ENCODE measurements at regions of chr1 and their contacts with region 1.

Region 1: GRCh38 chr1:199313434-199313833 is 674.6 kb downstream of the PTPRC start:
- DNase-seq: peak; percentile 95
- H3K4me3 ChIP-seq: no peak overlapping the region
- H3K27ac ChIP-seq: peak overlapping the region; percentile 95
- H3K4me1 ChIP-seq: peaks cover 47% of the 10 kb centered on the region
- H3K27me3 ChIP-seq: no peaks in the 10 kb centered on the region
- CTCF ChIP-seq: peak; percentile 62

Region 2: GRCh38 chr1:198771563-198772153 is 541.8 kb before region 1 on chr1:
- CTCF ChIA-PET with region 1: no interaction called
- POLR2A ChIA-PET with region 1: no interaction called
- intact Hi-C with region 1: loop called (anchors 1 kb)
- DNase-seq: peak; percentile 91
- H3K4me3 ChIP-seq: no peak overlapping the region
- H3K27ac ChIP-seq: peak overlapping the region; percentile 78
- H3K4me1 ChIP-seq: peaks cover 39% of the 10 kb centered on the region
- H3K27me3 ChIP-seq: no peaks in the 10 kb centered on the region
- CTCF ChIP-seq: peak; percentile 78

Region 3: DNA sequence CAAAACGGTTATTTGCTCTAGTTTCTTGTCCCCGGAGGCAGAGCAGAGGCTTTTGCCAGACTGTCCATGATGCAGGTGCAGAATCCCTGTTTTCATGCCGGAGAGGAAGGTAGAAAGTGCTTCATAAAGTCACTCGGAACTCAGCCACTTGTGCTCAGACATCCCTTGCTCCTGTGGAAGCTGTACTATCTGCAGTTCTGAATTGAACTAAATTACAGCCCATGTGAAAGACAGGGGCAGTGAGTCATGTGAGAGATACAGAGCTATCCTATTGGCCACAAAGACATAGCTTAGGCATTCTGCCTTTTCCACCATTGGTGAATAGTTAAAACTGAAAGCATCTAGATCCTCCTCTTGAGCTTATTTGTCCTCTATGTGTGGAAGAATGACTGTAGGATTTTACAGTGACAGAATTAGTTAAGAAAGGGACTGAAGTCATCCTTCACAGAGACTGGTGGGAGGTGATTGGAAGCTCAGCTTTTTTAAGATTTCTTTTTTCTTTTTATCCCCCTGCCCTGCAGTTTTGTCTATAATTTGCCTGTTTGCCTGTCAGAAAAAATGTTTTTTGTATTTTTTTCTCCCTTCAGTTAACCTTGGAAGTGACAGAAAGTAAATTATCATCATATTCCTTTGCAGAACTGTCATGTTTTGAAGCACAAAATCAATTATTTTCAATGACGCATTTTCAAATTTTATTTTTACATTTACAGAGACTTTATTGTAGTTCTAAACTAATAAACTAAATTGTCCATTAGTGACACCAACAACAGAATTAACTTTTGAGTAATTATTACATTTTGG is 376.0 kb before region 1 on chr1:
- CTCF ChIA-PET with region 1: no interaction called
- POLR2A ChIA-PET with region 1: no interaction called
- intact Hi-C with region 1: loop called (anchors 2 kb)
- DNase-seq: peak; percentile 98
- H3K4me3 ChIP-seq: peak overlapping the region; percentile 68
- H3K27ac ChIP-seq: peak overlapping the region; percentile 94
- H3K4me1 ChIP-seq: peaks cover 10% of the 10 kb centered on the region
- H3K27me3 ChIP-seq: no peaks in the 10 kb centered on the region
- CTCF ChIP-seq: no peak

Region 4: GRCh38 chr1:199272643-199273086 is 40.8 kb before region 1 on chr1:
- CTCF ChIA-PET with region 1: no interaction called
- POLR2A ChIA-PET with region 1: no interaction called
- intact Hi-C with region 1: loop called (anchors 2 kb)
- DNase-seq: peak; percentile 91
- H3K4me3 ChIP-seq: no peak overlapping the region
- H3K27ac ChIP-seq: peak overlapping the region; percentile 78
- H3K4me1 ChIP-seq: peaks cover 24% of the 10 kb centered on the region
- H3K27me3 ChIP-seq: no peaks in the 10 kb centered on the region
- CTCF ChIP-seq: no peak

Region 5: GRCh38 chr1:199463521-199464128 is 150.2 kb after region 1 on chr1:
- CTCF ChIA-PET with region 1: no interaction called
- POLR2A ChIA-PET with region 1: no interaction called
- intact Hi-C with region 1: loop called (anchors 2 kb)
- DNase-seq: peak; percentile 92
- H3K4me3 ChIP-seq: no peak overlapping the region
- H3K27ac ChIP-seq: peak overlapping the region; percentile 46
- H3K4me1 ChIP-seq: peaks cover 9% of the 10 kb centered on the region
- H3K27me3 ChIP-seq: no peaks in the 10 kb centered on the region
- CTCF ChIP-seq: peak; percentile 73

Measured in A673 (cell line).